Heart right ventricle (tissue), 16 donors: ENCODE measurements at regions of chr3 and their contacts with region 1.

Region 1: DNA sequence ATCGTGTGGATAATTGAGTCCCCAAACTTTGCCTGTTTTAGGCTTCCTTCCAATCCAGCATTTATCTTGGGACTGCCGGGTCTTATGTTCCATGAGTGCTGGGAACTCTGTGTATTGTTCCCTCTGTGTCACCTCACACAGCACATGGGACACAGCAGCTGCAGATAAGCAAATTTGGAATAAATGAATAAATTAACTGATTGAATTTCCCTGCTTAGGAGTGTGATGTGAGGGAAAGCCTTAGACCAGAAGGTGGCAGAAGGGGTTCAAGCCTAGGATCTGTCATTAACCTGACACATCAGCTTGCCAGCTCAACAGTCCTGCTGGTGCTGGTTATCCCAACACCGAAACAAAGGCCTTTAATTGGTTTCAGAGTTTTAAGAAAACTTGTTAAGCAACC is 114.3 kb downstream of the OXSM start:
- DNase-seq: peak in 1 of 2 donors; percentile 30
- ATAC-seq: peak in 6 of 8 donors; percentile 66 to 92 (median 84)
- H3K4me3 ChIP-seq: no peak overlapping the region
- H3K27ac ChIP-seq: no peak overlapping the region
- H3K4me1 ChIP-seq: peaks cover 0 to 17% (median 0%) of the 10 kb centered on the region in 9 donors
- H3K27me3 ChIP-seq: no peaks in the 10 kb centered on the region
- CTCF ChIP-seq: peak; percentile 21 to 76 (median 61)

Region 2: GRCh38 chr3:26068890-26069289 is 164.7 kb after region 1 on chr3:
- intact Hi-C with region 1: loop called in 1 of 10 experiments (anchors 10 kb)
- DNase-seq: peak; percentile 7 to 39
- ATAC-seq: peak in 7 of 8 donors; percentile 42 to 97 (median 93)
- H3K4me3 ChIP-seq: no peak overlapping the region
- H3K27ac ChIP-seq: peak overlapping the region in 1 of 10 donors; percentile 41
- H3K4me1 ChIP-seq: peaks cover 0 to 15% (median 3%) of the 10 kb centered on the region in 9 donors
- H3K27me3 ChIP-seq: no peaks in the 10 kb centered on the region
- CTCF ChIP-seq: no peak